ENCODE measurements at regions of chr1 and their contacts with region 1.

Region 1: GRCh38 chr1:40029608-40030007 is 10.9 kb upstream of the CAP1 start:
- DNase-seq: no peak
- CTCF ChIP-seq: no peak

Region 2: GRCh38 chr1:39922251-39922688 is 107.3 kb before region 1 on chr1:
- in situ Hi-C with region 1: loop called (anchors 5 kb)
- DNase-seq: no peak
- CTCF ChIP-seq: no peak